Ovary (tissue), 10 donors: ENCODE measurements at regions of chr19 and their contacts with region 1.

Region 1: DNA sequence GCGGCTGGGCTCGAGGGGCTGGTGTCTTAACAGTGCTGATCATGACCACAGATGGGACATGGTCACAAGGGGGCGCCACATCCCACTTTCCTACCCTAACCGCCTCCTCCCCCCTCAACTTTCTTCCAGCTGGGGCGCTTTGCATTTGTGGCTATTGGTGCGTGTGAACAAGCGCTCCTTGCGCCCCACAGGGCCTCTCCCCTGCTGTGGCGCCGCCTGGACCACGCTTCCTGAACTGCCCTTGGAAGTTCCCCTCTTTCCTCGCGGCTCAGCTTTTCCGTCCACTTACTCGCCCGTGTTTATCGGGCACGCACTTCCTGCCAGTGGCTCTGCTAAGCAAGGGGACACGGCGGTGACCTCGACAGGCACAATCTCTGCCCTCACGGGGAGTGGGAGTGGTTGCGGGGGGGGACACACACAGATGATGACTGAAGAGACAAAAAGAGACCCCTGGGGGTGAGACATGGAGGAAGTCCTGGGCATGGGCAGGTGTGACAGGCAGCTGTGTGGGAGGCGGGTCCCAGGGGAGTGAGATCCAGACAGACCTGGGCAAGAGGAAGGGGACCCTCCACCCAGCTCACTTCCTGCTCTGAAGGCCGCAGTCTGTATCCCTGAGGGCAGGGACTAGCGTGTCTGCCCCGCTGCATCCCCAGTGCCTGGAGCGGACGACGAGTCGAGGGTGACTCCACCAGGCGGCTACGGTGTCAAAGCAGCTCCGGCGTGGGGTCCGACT is 40.3 kb downstream of the ZNF787 start:
- DNase-seq: peak; percentile 43 to 71 (median 66)
- H3K4me3 ChIP-seq: no peak overlapping the region
- H3K27ac ChIP-seq: no peak overlapping the region
- H3K4me1 ChIP-seq: peaks cover 3% of the 10 kb centered on the region
- H3K27me3 ChIP-seq: no peaks in the 10 kb centered on the region
- CTCF ChIP-seq: no peak
- EP300 ChIP-seq: no peak
- POLR2A ChIP-seq: no peak

Region 2: GRCh38 chr19:56170261-56170660 is 89.4 kb after region 1 on chr19:
- intact Hi-C with region 1: loop called (anchors 5 to 10 kb)
- DNase-seq: no peak
- H3K4me3 ChIP-seq: no peak overlapping the region
- H3K27ac ChIP-seq: no peak overlapping the region
- H3K4me1 ChIP-seq: no peaks in the 10 kb centered on the region
- H3K27me3 ChIP-seq: no peaks in the 10 kb centered on the region
- CTCF ChIP-seq: no peak
- EP300 ChIP-seq: no peak
- POLR2A ChIP-seq: no peak

Region 3: GRCh38 chr19:56176881-56177280 is 96.0 kb after region 1 on chr19:
- intact Hi-C with region 1: loop called (anchors 5 to 10 kb)
- DNase-seq: no peak
- H3K4me3 ChIP-seq: no peak overlapping the region
- H3K27ac ChIP-seq: no peak overlapping the region
- H3K4me1 ChIP-seq: no peaks in the 10 kb centered on the region
- H3K27me3 ChIP-seq: no peaks in the 10 kb centered on the region
- CTCF ChIP-seq: no peak
- EP300 ChIP-seq: no peak
- POLR2A ChIP-seq: no peak

Region 4: DNA sequence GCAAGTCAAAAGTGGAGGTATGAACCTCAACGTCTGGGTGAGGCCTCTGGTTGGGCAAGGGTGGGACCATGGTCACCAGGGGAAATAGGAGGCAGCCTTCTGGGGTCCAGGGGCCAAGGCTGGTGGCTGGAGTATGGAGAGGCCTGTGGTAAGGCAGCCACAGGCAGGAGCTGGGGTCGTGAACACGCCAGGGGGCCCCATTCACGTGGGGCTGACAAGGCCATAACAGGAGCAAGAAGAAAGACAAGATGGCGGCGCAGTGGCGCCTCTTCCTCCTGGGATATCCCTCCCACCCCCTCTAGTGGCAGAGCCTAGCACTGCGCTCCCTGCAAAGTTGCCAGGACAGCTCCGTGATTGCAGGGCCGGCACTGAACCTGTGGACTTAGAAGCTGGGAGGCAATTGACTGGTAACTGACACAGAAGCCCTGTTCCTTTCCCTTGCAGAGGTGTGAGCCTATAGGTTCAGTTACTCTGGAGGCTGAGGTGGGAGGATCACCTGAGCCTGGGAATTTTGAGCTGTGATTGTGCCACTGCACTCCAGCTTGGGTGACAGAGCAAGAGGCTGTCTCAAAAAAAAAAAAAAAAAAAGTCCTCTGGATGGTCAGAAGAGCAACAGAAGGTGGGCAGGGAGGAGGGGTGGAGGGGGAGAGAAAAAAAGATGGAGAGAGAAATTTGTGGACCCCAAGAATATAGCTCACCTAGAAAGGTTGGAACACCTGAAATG is 172.0 kb after region 1 on chr19:
- intact Hi-C with region 1: loop called in 1 of 4 experiments (anchors 10 kb)
- DNase-seq: peak; percentile 31 to 70 (median 55)
- H3K4me3 ChIP-seq: no peak overlapping the region
- H3K27ac ChIP-seq: no peak overlapping the region
- H3K4me1 ChIP-seq: no peaks in the 10 kb centered on the region
- H3K27me3 ChIP-seq: no peaks in the 10 kb centered on the region
- CTCF ChIP-seq: peak; percentile 18 to 35 (median 20)
- EP300 ChIP-seq: no peak
- POLR2A ChIP-seq: no peak

Region 5: DNA sequence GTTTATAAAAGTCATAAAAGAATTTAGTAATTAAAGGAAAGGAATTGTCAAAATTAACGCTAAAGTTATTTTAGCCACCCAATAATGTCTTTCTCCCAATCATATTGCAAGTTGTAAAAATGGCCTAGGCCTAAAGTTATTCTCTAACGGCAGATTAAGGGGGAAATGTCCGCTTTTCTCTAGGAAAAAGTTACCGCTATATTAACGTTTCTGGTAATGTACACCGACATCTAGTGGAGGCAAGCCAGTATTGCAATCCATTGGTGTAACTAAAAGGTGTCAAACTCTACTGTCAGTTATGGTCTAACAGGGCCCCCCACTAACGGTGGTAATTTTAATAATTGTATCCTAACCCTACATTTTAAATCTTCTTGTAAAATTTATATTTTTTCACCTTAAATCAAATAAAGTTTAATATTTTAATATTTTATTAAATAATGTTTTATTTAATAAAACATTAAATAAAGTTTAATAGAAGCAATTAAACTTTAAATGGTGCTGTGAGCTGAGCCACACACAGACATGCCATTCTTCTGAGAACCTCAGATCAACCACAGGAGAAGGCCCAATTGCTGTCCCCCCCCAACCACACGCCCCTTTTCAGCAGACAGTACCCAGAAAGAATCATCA is 269.7 kb after region 1 on chr19:
- intact Hi-C with region 1: loop called in 3 of 4 experiments (anchors 10 kb)
- DNase-seq: peak in 3 of 5 donors; percentile 21 to 67 (median 43)
- H3K4me3 ChIP-seq: no peak overlapping the region
- H3K27ac ChIP-seq: no peak overlapping the region
- H3K4me1 ChIP-seq: no peaks in the 10 kb centered on the region
- H3K27me3 ChIP-seq: no peaks in the 10 kb centered on the region
- CTCF ChIP-seq: peak; percentile 34 to 79 (median 78)
- EP300 ChIP-seq: no peak
- POLR2A ChIP-seq: no peak